Activated CD8-positive, alpha-beta T cell treated with anti-CD3 and anti-CD28 coated beads for 36 hours (primary cell): ENCODE measurements at regions of chr19 and their contacts with region 1.

Region 1: DNA sequence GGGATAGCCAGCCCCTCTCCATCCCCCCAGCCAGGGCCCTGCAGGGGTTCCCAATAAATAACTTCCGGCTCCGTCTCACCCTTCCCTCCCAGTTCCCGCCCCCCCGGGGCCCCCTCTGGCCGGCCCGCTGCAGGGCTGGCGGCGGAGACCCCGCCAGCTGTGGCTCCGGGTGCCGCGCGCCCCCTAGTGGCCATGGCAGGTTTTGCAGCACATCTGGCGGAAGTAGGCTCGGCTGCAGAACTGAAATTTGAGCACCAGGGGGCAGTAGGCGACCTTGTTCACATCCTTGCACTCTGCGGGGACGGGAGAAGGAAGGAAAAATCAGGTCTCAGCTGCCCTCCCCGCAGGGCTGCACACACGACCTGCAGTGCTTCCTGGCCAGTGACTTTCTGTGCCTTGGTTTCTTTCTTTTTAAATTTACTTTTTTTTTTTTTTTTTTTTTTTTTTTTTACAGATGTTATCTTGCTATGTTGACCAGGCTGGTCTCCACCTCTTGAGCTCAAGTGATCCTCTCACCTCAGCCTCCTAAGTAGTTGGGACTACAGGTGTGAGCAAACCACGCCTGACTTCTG is 3.6 kb upstream of the MYO1F start:
- DNase-seq: peak; percentile 91
- ATAC-seq: peak; percentile 69
- H3K4me3 Mint-ChIP-seq: no peak overlapping the region
- H3K27ac Mint-ChIP-seq: no peak overlapping the region
- H3K4me1 Mint-ChIP-seq: peaks cover 20% of the 10 kb centered on the region
- H3K27me3 Mint-ChIP-seq: peaks cover 2% of the 10 kb centered on the region
- CTCF ChIP-seq: peak; percentile 100

Region 2: DNA sequence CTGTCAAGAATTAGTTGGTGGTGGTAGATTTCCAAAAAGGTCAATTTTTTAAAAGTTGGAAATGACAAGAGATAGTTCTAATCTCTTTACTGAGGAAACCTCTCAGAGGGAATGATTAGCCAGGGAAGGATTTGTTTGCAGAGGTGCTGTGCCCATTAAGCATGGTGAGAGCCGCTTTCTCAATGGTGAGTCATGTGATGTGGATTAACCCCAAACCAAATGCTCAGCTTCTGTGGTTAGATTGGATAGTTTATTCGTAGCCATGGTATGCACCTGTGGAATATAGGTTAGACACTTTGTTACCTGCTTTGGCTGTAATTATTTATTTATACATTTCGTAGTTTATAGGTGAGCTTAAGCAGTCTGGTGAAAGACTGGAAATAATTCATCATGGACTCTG is 128.9 kb before region 1 on chr19:
- CTCF ChIA-PET with region 1: interaction called, 28 read pairs
- POLR2A ChIA-PET with region 1: interaction called, 4 read pairs
- intact Hi-C with region 1: no loop called
- DNase-seq: no peak
- ATAC-seq: peak; percentile 53
- H3K4me3 Mint-ChIP-seq: no peak overlapping the region
- H3K27ac Mint-ChIP-seq: peak overlapping the region; percentile 48
- H3K4me1 Mint-ChIP-seq: peaks cover 79% of the 10 kb centered on the region
- H3K27me3 Mint-ChIP-seq: no peaks in the 10 kb centered on the region
- CTCF ChIP-seq: no peak

Region 3: GRCh38 chr19:8494158-8494557 is 86.6 kb before region 1 on chr19:
- CTCF ChIA-PET with region 1: interaction called, 12 read pairs
- POLR2A ChIA-PET with region 1: no interaction called
- intact Hi-C with region 1: no loop called
- DNase-seq: peak; percentile 43
- ATAC-seq: peak; percentile 67
- H3K4me3 Mint-ChIP-seq: no peak overlapping the region
- H3K27ac Mint-ChIP-seq: peak overlapping the region; percentile 76
- H3K4me1 Mint-ChIP-seq: peaks cover 21% of the 10 kb centered on the region
- H3K27me3 Mint-ChIP-seq: no peaks in the 10 kb centered on the region
- CTCF ChIP-seq: no peak

Region 4: DNA sequence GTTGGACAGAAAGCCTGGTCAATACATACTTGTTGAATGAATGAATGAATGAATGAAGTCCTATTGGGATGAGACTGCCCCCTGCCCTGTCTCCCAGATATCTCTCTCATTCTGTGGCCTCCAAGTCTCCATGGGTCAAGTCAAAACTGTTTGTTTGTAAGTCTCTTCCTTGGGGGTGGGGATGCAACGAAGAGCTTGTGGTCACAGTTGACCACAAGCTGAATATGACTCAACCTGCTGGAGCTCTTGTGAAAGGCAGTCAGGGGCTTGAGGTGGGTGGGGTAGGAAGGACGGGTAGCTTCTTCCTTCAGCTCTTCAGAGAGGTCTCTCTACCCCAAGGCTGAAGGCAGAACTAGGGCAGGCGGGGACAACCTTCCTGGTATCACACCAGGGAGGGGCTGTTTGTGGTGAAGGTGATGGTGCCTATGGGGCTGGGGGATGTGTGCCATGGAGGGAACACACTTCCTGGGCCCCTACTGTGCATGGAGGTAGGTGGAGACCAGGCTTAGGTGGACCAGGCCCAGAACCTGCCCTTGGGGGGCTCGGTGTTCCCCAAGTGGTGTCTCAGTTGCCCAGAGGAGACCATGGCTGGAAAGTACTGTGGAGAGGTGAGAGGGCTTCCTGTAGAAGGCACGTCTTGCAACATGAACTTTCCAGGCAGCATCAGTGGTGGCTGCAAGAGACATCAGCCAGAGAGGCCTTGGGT is 11.6 kb before region 1 on chr19:
- CTCF ChIA-PET with region 1: interaction called, 70 read pairs
- POLR2A ChIA-PET with region 1: interaction called, 3 read pairs
- intact Hi-C with region 1: no loop called
- DNase-seq: peak; percentile 88
- ATAC-seq: peak; percentile 86
- H3K4me3 Mint-ChIP-seq: peak overlapping the region; percentile 60
- H3K27ac Mint-ChIP-seq: peak overlapping the region; percentile 96
- H3K4me1 Mint-ChIP-seq: peaks cover 54% of the 10 kb centered on the region
- H3K27me3 Mint-ChIP-seq: no peaks in the 10 kb centered on the region
- CTCF ChIP-seq: no peak

Region 5: DNA sequence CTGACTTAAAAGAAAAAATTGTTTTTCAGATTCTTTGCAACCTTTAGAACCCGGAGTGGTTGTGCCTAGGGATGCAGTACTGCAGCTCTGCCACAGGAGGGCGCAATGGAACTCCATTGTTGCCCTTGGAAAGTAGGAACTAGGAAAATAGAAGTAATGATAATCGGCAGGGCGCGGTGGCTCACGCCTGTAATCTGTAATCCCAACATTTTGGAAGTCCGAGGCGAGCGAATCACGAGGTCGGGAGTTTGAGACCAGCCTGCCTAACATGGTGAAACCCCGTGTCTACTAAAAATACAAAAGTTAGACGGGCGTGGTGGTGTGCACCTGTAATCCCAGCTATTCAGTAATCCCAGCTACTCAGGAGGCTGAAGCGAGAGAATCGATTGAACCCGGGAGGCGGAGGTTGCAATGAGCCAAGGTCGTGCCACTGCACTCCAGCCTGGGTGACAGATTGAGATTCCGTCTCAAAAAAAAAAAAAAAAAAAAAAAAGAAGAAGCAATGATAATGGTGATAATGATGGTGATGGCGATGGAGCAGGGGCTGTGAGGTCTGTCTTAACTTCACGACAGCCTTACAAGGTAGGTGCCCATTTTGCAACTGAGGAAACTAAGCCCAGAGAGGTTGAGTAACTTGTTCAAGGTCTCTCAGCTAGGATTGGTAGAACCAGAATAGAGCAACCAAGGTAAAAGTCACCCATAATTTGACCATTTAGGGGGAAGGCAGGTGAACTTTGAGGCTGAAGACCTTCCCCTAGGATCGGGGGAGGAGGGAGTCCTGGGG is 35.2 kb after region 1 on chr19:
- CTCF ChIA-PET with region 1: interaction called, 71 read pairs
- POLR2A ChIA-PET with region 1: no interaction called
- intact Hi-C with region 1: no loop called
- DNase-seq: peak; percentile 67
- ATAC-seq: peak; percentile 32
- H3K4me3 Mint-ChIP-seq: no peak overlapping the region
- H3K27ac Mint-ChIP-seq: no peak overlapping the region
- H3K4me1 Mint-ChIP-seq: peaks cover 20% of the 10 kb centered on the region
- H3K27me3 Mint-ChIP-seq: peaks cover 1% of the 10 kb centered on the region
- CTCF ChIP-seq: peak; percentile 95

Region 6: DNA sequence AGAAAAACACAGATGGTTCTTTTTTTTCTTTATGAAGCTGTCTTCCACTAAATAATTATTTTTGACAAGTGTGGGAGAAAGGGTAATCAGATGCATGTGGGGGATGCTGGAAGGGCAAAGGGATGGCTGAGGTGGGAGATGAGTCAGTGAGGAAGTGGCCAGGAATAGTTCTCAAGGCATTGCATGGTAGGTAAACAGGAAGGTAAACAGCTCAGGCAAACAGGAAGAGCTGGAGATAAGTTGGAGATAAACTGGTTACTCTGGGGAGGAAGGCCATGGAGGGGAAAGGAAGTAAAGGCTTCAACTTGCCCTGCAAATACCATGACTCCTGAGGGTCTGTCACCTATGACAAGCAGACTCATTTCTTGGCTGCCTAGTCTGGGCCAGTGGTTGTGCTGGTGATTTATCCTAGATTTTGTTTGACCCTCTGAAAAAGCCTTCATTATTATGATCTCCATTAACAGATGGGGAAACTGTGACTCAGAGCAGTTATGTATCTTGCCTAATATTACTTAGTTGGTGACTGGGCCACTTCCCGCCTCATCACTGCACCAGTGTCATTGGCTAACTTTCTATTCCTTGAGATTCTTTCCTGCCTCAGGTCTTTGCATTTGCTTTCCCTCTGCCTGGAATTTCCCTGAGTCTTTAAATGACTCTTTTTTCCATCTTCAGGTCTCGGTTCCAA is 100.7 kb after region 1 on chr19:
- CTCF ChIA-PET with region 1: no interaction called
- POLR2A ChIA-PET with region 1: no interaction called
- intact Hi-C with region 1: no loop called
- DNase-seq: no peak
- ATAC-seq: no peak
- H3K4me3 Mint-ChIP-seq: no peak overlapping the region
- H3K27ac Mint-ChIP-seq: no peak overlapping the region
- H3K4me1 Mint-ChIP-seq: peaks cover 13% of the 10 kb centered on the region
- H3K27me3 Mint-ChIP-seq: no peaks in the 10 kb centered on the region
- CTCF ChIP-seq: no peak

Region 7: GRCh38 chr19:8826383-8826782 is 245.6 kb after region 1 on chr19:
- CTCF ChIA-PET with region 1: no interaction called
- POLR2A ChIA-PET with region 1: no interaction called
- intact Hi-C with region 1: no loop called
- DNase-seq: no peak
- ATAC-seq: no peak
- H3K4me3 Mint-ChIP-seq: no peak overlapping the region
- H3K27ac Mint-ChIP-seq: no peak overlapping the region
- H3K4me1 Mint-ChIP-seq: peaks cover 16% of the 10 kb centered on the region
- H3K27me3 Mint-ChIP-seq: no peaks in the 10 kb centered on the region
- CTCF ChIP-seq: no peak